Colonic mucosa (tissue), 4 donors: ENCODE measurements at regions of chr2 and their contacts with region 1.

Region 1: DNA sequence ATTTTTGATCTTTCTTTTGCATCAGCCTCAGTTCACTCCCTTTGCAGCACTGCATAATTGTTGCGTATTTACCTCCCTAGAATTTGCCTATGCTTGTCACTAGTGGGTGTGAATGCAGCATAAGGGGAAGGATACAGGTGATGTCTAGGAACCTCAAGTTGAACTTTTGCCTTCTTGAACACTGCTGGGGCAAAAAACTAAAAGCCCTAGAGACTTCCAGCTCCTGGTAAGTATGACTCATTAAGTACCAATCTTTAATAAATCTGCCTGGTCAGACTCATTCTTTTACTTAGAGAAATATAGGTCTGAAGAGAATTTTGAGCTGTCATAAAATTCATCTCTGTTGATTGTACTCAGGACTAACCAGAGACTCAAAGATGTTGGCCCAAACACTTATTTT is 547.3 kb upstream of the FANCL start:
- DNase-seq: no peak
- H3K4me3 ChIP-seq: no peak overlapping the region
- H3K27ac ChIP-seq: no peak overlapping the region
- H3K4me1 ChIP-seq: no peaks in the 10 kb centered on the region
- H3K27me3 ChIP-seq: no peaks in the 10 kb centered on the region
- CTCF ChIP-seq: no peak

Region 2: GRCh38 chr2:58798676-58799208 is 10.3 kb after region 1 on chr2:
- intact Hi-C with region 1: loop called (anchors 2 kb)
- DNase-seq: no peak
- H3K4me3 ChIP-seq: no peak overlapping the region
- H3K27ac ChIP-seq: no peak overlapping the region
- H3K4me1 ChIP-seq: no peaks in the 10 kb centered on the region
- H3K27me3 ChIP-seq: no peaks in the 10 kb centered on the region
- CTCF ChIP-seq: no peak